Calu3 (cell line): ENCODE measurements at regions of chr14 and their contacts with region 1.

Region 1: DNA sequence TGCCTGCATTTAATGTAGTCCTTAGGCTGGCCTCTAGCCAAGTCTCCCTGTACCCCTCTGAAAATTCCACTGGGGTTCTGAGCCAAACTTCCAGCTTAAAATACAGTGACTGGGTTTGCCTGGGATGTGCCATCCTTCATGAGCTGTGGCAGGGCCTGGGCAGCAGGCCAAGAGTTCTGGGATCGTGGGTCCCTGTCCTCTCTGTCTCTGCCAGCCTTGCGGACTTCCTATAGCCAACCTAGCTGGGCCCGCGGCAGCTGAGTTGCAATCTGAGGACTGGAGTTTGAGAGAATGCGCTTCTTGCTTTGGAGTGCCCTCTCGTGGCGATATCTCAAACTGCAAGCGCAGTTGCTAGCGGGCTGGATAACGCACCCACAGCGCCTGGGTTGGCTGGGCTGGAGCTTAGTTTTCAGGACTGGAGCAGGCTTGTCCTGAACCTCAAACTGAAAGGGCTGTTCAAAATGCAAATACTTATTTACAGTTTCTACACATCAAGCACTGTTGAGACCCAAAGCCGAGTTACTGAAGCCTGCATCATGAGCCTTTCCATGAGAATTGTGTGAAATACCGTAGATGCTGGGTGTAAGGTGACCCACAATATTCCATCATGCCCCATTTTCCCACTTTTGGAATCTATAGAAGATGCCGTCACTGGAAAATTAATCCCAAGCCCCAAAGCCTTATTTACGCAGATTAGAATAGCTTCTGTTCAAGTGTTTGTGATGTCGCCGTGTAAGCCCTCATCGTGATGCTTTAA is 7.3 kb upstream of the IFI27L2 start:
- DNase-seq: peak; percentile 86
- H3K4me3 Mint-ChIP-seq: no peak overlapping the region
- H3K27ac Mint-ChIP-seq: no peak overlapping the region
- H3K4me1 Mint-ChIP-seq: no peaks in the 10 kb centered on the region
- H3K27me3 Mint-ChIP-seq: peaks cover 14% of the 10 kb centered on the region
- CTCF ChIP-seq: peak; percentile 85

Region 2: GRCh38 chr14:94036313-94037050 is 100.3 kb before region 1 on chr14:
- CTCF ChIA-PET with region 1: interaction called, 18 read pairs
- intact Hi-C with region 1: no loop called
- DNase-seq: peak; percentile 73
- H3K4me3 Mint-ChIP-seq: no peak overlapping the region
- H3K27ac Mint-ChIP-seq: no peak overlapping the region
- H3K4me1 Mint-ChIP-seq: no peaks in the 10 kb centered on the region
- H3K27me3 Mint-ChIP-seq: no peaks in the 10 kb centered on the region
- CTCF ChIP-seq: peak; percentile 59

Region 3: DNA sequence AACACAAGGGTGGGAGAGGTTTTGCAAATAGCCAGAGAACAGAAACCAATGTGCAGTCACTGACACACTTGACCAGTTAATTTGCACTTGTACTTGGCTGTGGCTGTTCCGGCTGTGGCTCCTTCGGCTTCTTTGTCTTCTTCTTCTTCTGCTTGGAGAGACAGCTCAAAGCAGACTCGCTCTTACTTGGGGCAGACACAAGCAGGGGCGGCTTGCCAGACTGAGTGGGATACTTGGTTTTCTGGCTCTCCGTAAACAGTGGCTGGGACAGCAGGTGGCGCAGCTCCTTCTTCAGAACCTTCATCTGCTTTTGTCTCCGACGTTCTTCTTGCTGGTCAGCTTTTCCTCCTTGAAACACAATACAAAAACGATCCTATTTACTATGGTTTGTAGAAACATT is 85.6 kb before region 1 on chr14:
- CTCF ChIA-PET with region 1: interaction called, 16 read pairs
- intact Hi-C with region 1: loop called (anchors 1 kb)
- DNase-seq: peak; percentile 38
- H3K4me3 Mint-ChIP-seq: no peak overlapping the region
- H3K27ac Mint-ChIP-seq: no peak overlapping the region
- H3K4me1 Mint-ChIP-seq: no peaks in the 10 kb centered on the region
- H3K27me3 Mint-ChIP-seq: no peaks in the 10 kb centered on the region
- CTCF ChIP-seq: peak; percentile 26

Region 4: DNA sequence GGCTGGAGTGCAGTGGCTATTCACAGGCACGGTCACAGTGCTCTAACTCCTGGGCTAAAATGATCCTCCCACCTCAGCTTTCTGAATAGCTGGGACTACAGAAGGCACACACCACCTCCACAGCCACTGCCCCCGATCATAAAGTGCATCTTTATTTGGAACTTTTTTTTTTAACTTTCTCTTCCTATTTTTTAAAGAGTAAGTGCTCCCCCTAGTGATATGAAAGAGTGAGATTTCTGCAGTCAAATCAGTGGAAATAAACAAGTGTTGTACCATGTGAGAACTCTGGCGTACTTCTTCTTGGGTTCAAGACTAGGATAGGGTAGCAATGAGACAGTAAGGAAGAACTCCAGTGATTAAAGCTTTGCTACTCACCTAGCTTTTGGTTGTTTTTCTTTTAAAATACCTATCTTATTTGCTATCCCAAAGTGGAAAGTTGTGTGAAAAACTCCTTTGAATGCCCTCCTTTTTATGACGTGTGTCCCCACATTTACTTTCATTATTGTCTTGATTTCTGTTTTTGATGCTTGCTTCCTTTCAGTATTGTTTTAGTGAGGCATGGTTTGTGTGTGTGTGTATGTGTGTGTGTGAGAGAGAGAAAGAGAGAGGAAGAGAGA is 44.0 kb after region 1 on chr14:
- CTCF ChIA-PET with region 1: interaction called, 6 read pairs
- intact Hi-C with region 1: loop called (anchors 2 kb)
- DNase-seq: no peak
- H3K4me3 Mint-ChIP-seq: peak overlapping the region; percentile 17
- H3K27ac Mint-ChIP-seq: no peak overlapping the region
- H3K4me1 Mint-ChIP-seq: peaks cover 10% of the 10 kb centered on the region
- H3K27me3 Mint-ChIP-seq: peaks cover 45% of the 10 kb centered on the region
- CTCF ChIP-seq: peak; percentile 42

Region 5: GRCh38 chr14:94392510-94392935 is 255.8 kb after region 1 on chr14:
- CTCF ChIA-PET with region 1: no interaction called
- intact Hi-C with region 1: loop called (anchors 5 kb)
- DNase-seq: no peak
- H3K4me3 Mint-ChIP-seq: no peak overlapping the region
- H3K27ac Mint-ChIP-seq: no peak overlapping the region
- H3K4me1 Mint-ChIP-seq: peaks cover 79% of the 10 kb centered on the region
- H3K27me3 Mint-ChIP-seq: no peaks in the 10 kb centered on the region
- CTCF ChIP-seq: no peak

Region 6: GRCh38 chr14:94412671-94413638 is 276.2 kb after region 1 on chr14:
- CTCF ChIA-PET with region 1: interaction called, 3 read pairs
- intact Hi-C with region 1: loop called (anchors 2 kb)
- DNase-seq: peak; percentile 53
- H3K4me3 Mint-ChIP-seq: no peak overlapping the region
- H3K27ac Mint-ChIP-seq: no peak overlapping the region
- H3K4me1 Mint-ChIP-seq: peaks cover 29% of the 10 kb centered on the region
- H3K27me3 Mint-ChIP-seq: peaks cover 11% of the 10 kb centered on the region
- CTCF ChIP-seq: peak; percentile 63